Gastrocnemius medialis (tissue), 4 donors: ENCODE measurements at regions of chr5 and their contacts with region 1.

Region 1: GRCh38 chr5:172714491-172715421 is 56.2 kb downstream of the DUSP1 start:
- DNase-seq: peak; percentile 59 to 72
- ATAC-seq: peak; percentile 52 to 73
- H3K4me3 ChIP-seq: no peak overlapping the region
- H3K27ac ChIP-seq: peak overlapping the region; percentile 64 to 80 (median 76)
- H3K4me1 ChIP-seq: peaks cover 16 to 32% of the 10 kb centered on the region in 2 donors
- H3K27me3 ChIP-seq: no peaks in the 10 kb centered on the region
- CTCF ChIP-seq: peak; percentile 83 to 89 (median 87)
- POLR2A ChIP-seq: no peak

Region 2: GRCh38 chr5:172454358-172455086 is 260.2 kb before region 1 on chr5 and contains the start of gene SH3PXD2B:
- in situ Hi-C with region 1: no loop called
- intact Hi-C with region 1: no loop called
- DNase-seq: no peak
- ATAC-seq: peak; percentile 31 to 51
- H3K4me3 ChIP-seq: peak within 1 kb of the TSS; percentile 64 to 77 (median 71)
- H3K27ac ChIP-seq: peak within 1 kb of the TSS; percentile 60 to 74 (median 65)
- H3K4me1 ChIP-seq: peaks cover 0 to 5% of the 10 kb centered on the region in 2 donors
- H3K27me3 ChIP-seq: no peaks in the 10 kb centered on the region
- CTCF ChIP-seq: no peak
- POLR2A ChIP-seq: peak; percentile 50 to 72
- total RNA-seq, gene SH3PXD2B: 2.7 to 10.2 (median 4.2) TPM

Region 3: GRCh38 chr5:172683696-172684471 is 30.9 kb before region 1 on chr5:
- in situ Hi-C with region 1: no loop called
- intact Hi-C with region 1: no loop called
- DNase-seq: no peak
- ATAC-seq: no peak
- H3K4me3 ChIP-seq: no peak overlapping the region
- H3K27ac ChIP-seq: peak overlapping the region in 2 of 4 donors; percentile 76 to 77
- H3K4me1 ChIP-seq: peaks cover 0 to 14% of the 10 kb centered on the region in 2 donors
- H3K27me3 ChIP-seq: no peaks in the 10 kb centered on the region
- CTCF ChIP-seq: no peak
- POLR2A ChIP-seq: no peak

Region 4: DNA sequence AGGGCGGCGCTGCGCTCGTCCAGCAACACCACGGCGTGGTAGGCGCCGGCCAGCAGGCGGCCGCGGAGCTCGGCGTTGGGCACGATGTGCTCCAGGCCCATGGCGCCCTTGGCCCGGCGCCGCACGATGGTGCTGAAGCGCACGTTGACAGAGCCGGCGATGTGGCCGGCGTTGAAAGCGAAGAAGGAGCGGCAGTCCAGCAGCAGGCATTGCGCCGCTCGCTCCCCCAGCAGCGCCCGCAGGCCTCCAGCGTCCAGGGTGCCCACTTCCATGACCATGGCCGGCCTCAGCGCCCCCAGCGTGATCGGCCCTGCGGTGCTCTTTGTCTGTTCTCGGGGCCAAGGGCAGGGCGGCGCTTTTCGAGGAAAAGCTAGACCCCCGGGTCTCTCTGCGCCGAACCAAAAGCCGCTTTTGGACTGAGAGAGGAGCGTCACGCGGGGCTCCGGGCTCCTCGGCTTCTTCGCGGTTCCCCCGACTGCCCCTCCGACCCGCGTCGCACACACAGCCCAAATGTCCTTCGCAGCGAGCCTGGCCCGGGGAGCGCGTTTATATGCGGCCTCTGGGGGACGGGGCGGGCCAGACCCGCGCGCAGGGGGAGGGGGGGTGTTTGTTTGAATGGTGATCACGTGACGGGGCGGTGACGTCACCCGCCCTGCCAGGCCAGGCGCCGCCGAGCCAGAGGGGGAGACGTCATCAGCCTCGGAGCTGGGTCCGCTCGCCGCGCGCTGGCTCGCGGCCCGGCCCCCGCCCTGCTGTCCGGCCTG is 56.1 kb after region 1 on chr5 and contains the start of gene DUSP1:
- in situ Hi-C with region 1: loop called in 1 of 4 experiments (anchors 10 kb)
- intact Hi-C with region 1: loop called (anchors 2 kb)
- DNase-seq: peak; percentile 99
- ATAC-seq: peak; percentile 34 to 42
- H3K4me3 ChIP-seq: peak within 1 kb of the TSS; percentile 66 to 98 (median 83)
- H3K27ac ChIP-seq: peak within 1 kb of the TSS; percentile 96 to 99 (median 96)
- H3K4me1 ChIP-seq: peaks cover 39 to 42% of the 10 kb centered on the region in 2 donors
- H3K27me3 ChIP-seq: no peaks in the 10 kb centered on the region
- CTCF ChIP-seq: peak; percentile 32 to 77 (median 40)
- POLR2A ChIP-seq: peak in 1 of 2 donors; percentile 100
- total RNA-seq, gene DUSP1: 345 to 1,004 (median 793) TPM

Region 5: DNA sequence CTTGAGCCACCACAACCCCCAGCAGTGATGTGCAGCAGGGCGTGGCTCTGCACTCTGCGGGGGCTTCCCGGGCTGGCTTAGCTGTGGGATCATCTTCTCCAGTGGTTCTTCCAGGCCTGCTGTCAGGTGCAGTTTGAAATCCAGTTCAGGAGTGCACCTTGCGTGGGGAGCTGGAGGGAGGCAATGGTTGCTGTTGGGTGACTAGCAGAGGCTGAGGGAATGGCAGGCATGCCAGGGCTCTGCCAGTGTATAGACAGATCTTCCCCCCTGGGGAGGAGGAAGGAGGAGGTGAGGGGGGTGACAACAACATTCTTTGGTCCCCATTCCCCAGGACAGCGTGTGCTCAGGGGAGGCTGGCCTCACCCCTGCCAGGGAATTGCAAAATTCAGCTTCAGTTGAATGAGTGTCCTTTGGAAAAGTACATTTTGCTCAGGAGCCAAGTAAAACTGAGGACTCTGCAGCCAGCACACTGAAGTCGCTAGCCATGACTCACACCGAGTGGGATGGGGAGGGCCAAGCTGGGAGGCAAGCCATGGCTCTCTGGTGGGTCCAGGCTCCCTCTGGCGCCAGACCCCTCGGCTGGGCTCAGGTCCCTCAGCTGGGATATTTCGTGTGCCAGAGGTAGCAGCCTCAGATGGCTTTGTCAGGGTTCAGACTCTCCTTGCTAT is 154.3 kb after region 1 on chr5:
- in situ Hi-C with region 1: no loop called
- intact Hi-C with region 1: loop called (anchors 1 kb)
- DNase-seq: peak; percentile 94 to 97
- ATAC-seq: peak; percentile 65 to 67
- H3K4me3 ChIP-seq: peak overlapping the region in 3 of 4 donors; percentile 6 to 23 (median 18)
- H3K27ac ChIP-seq: peak overlapping the region; percentile 85 to 98 (median 94)
- H3K4me1 ChIP-seq: peaks cover 93 to 95% of the 10 kb centered on the region in 2 donors
- H3K27me3 ChIP-seq: no peaks in the 10 kb centered on the region
- CTCF ChIP-seq: peak in 4 of 5 experiments; percentile 41 to 52 (median 45)
- POLR2A ChIP-seq: peak; percentile 9 to 68

Region 6: DNA sequence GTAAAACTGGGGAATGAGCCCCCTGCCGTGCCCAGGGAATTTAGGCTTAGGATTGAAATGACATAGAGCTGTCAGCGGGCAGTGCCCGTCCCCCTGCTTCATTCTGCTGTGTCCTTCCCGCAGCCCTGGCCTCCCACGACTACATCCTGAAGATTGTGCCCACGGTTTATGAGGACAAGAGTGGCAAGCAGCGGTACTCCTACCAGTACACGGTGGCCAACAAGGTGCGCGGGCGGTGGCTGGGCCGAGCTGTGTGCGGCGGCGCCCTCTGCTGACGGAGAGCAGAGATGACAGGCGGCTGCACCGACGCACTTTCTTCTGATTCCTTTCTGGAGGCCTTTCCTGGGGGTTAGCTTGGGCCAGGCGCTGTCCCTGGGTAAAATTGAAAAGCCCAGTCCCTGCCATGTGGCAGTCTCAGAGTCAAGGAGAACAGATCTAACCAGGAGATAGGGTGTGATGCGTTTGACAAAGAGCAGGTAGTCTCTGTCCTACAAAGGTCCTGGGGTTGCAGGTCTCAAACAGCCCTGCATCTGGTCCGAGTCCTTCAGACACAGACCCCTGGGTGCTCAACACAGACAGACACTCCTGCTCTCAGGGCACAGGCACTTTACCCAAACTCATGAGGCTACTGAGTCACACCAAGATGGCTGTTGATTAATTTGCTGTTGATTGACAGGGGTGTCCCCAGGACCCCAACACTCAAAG is 217.7 kb after region 1 on chr5:
- in situ Hi-C with region 1: loop called in 3 of 4 experiments (anchors 5 kb)
- intact Hi-C with region 1: loop called (anchors 1 kb)
- DNase-seq: peak; percentile 60 to 66
- ATAC-seq: peak; percentile 73 to 92
- H3K4me3 ChIP-seq: no peak overlapping the region
- H3K27ac ChIP-seq: peak overlapping the region in 3 of 4 donors; percentile 2 to 67 (median 65)
- H3K4me1 ChIP-seq: peaks cover 10 to 12% of the 10 kb centered on the region in 2 donors
- H3K27me3 ChIP-seq: no peaks in the 10 kb centered on the region
- CTCF ChIP-seq: peak; percentile 94 to 99 (median 98)
- POLR2A ChIP-seq: no peak

Region 7: DNA sequence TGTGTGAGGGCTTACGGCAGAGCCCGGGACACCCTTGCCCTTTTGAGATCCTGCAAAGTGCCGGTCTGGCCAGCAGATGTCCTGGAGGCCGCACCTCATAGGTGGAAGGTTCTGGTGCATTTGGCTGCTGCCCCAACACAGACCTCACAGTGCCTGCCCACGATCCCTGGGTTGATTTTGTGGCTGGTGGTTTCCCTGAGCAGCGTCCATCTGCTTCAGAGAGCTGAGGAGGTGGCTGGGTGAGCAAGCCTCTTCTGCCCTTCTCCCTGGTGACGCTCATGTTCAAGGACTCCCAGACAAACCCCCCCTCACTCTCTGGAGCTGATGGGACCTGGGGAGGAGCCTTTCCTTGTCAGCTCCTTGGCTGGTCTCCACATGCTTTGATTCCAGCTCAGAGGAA is 448.5 kb after region 1 on chr5:
- in situ Hi-C with region 1: loop called in 1 of 4 experiments (anchors 25 kb)
- intact Hi-C with region 1: no loop called
- DNase-seq: no peak
- ATAC-seq: no peak
- H3K4me3 ChIP-seq: no peak overlapping the region
- H3K27ac ChIP-seq: no peak overlapping the region
- H3K4me1 ChIP-seq: no peaks in the 10 kb centered on the region
- H3K27me3 ChIP-seq: no peaks in the 10 kb centered on the region
- CTCF ChIP-seq: no peak
- POLR2A ChIP-seq: no peak